OCI-LY7 (cell line): ENCODE measurements at regions of chr10 and their contacts with region 1.

Region 1: DNA sequence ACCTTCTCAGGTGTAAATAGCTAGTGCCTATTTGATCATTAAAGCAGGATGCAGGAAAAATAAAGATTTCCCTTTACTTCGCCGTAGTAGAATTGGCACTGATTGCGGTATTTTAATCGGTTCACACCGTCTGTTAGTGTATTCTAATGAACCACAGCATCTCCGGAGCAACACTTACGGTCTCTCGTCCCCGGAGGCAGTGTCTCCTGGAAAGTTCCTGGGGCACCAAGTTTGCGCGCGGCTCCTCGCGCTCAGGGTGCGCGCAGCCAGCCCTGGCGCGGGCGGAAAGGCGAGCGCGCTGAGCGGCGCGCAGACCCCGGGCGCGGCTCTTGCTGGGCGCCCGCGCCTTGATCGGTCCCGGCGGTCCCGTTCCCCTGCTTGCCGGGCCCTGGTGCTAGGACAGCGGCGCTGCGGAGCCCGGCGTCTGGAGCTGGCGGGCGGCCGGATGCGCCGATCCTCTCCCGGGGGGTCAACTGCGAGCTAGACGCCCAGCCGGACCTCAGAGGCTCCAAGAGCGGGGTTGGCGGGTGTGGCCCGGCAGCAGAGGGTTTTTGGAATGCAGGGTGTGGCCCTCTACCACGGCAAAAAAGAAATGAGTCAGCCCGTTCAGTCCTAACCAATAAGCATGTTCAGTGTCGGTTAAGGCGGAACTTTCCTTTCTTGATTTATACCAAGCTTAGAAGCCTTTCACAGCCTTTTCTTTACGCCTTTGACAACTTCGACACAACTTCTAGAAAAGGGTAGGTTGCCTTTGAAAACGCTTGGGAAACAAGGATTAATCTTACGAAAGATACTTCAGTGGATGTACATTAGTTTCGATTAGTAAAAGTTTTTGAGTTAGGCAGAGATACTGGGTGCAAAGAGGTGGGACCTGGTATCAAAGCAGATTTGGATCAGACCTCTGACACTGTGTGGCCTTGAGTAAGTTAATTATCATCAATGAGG is 166.8 kb upstream of the ASAH2 start:
- DNase-seq: peak; percentile 69
- H3K4me3 ChIP-seq: peak overlapping the region; percentile 70
- H3K27ac ChIP-seq: peak overlapping the region; percentile 7
- H3K4me1 ChIP-seq: peaks cover 33% of the 10 kb centered on the region
- CTCF ChIP-seq: 0 out of 2 replicates have a peak, but pooled peaks have one; percentile 25

Region 2: GRCh38 chr10:50367732-50368131 is 50.4 kb before region 1 on chr10:
- CTCF ChIA-PET with region 1: no interaction called
- POLR2A ChIA-PET with region 1: interaction called, 7 read pairs
- intact Hi-C with region 1: loop called (anchors 5 kb)
- DNase-seq: peak; percentile 56
- H3K4me3 ChIP-seq: no peak overlapping the region
- H3K27ac ChIP-seq: no peak overlapping the region
- H3K4me1 ChIP-seq: peaks cover 24% of the 10 kb centered on the region
- CTCF ChIP-seq: peak; percentile 79

Region 3: DNA sequence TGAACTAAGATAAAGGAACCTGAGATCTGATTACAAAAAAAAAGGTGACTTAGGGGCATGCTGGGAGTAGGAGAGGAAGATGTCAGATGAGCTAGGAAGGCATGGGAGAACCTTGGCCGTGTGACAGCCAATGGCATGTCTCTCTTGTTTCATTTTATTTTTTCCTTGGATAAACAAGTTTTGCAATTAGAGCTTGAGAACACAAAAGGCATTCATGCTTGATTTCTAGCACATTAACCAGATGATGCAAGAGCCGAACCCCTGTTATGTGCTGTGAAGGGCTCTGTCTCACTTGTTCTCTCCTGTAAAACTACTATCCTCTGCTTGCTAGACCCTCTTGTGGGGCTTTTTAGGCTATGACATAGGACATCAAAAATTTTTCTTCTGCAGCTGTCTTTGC is 32.5 kb before region 1 on chr10:
- CTCF ChIA-PET with region 1: no interaction called
- POLR2A ChIA-PET with region 1: interaction called, 13 read pairs
- intact Hi-C with region 1: no loop called
- DNase-seq: no peak
- H3K4me3 ChIP-seq: no peak overlapping the region
- H3K27ac ChIP-seq: no peak overlapping the region
- H3K4me1 ChIP-seq: peaks cover 20% of the 10 kb centered on the region
- CTCF ChIP-seq: no peak